SK-N-SH (cell line): ENCODE measurements at regions of chr3 and their contacts with region 1.

Region 1: GRCh38 chr3:126522363-126522788 is 1.6 kb upstream of the CHST13 start:
- DNase-seq: peak; percentile 88
- H3K4me3 ChIP-seq: peak overlapping the region in 1 of 2 experiments; percentile 18; a peak in 1 of 4 replicates
- H3K27ac ChIP-seq: no peak overlapping the region
- H3K4me1 ChIP-seq: peaks cover 0 to 18% of the 10 kb centered on the region in 2 experiments; a peak in 1 of 4 replicates
- H3K27me3 ChIP-seq: no peaks in the 10 kb centered on the region; the same call in 1 of the 2 replicates
- CTCF ChIP-seq: peak; percentile 79
- EP300 ChIP-seq: no peak
- RAD21 ChIP-seq: peak; percentile 83

Region 2: GRCh38 chr3:126508539-126508938 is 13.8 kb before region 1 on chr3:
- CTCF ChIA-PET with region 1: interaction called, 45 read pairs
- POLR2A ChIA-PET with region 1: interaction called, 3 read pairs
- DNase-seq: no peak
- H3K4me3 ChIP-seq: no peak overlapping the region
- H3K27ac ChIP-seq: no peak overlapping the region
- H3K4me1 ChIP-seq: peaks cover 0 to 4% of the 10 kb centered on the region in 2 experiments; a peak in 1 of 4 replicates
- H3K27me3 ChIP-seq: peaks cover 10% of the 10 kb centered on the region; the same call in 1 of the 2 replicates
- CTCF ChIP-seq: no peak
- EP300 ChIP-seq: no peak
- RAD21 ChIP-seq: no peak

Region 3: DNA sequence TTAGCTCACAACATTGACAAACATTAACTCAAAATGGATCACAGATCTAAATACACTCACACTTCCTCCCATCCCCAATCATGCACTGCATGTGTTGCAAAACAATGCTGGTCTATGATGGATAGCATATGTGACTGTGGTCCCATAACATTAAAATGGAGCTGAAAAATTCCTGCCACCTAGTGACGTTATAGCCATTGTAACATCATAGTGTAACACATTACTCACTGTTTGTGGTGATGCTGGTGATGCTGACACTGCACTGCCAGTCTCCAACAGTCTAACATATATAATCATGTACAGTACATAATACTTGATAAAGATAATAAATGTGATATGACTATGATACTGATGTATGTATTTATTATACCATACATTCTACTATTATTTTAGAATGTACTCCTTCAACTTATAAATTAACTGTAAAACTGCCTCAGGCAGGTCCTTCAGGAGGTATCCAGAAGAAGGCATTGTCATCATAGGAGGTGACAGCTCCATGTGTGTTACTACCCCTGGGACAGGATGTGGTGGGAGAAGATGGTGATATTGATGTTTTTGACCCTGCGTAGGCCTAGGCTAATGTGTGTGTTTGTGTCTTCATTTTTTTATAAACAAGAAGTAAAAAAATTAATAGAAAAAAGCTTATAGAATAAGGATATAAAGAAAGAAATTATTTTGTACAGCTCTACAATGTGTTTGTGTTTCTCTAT is 91.3 kb after region 1 on chr3:
- CTCF ChIA-PET with region 1: interaction called, 13 read pairs
- POLR2A ChIA-PET with region 1: no interaction called
- DNase-seq: peak; percentile 17
- H3K4me3 ChIP-seq: no peak overlapping the region
- H3K27ac ChIP-seq: peak overlapping the region in 1 of 2 experiments; percentile 43; a peak in 1 of 4 replicates
- H3K4me1 ChIP-seq: peaks cover 0 to 12% of the 10 kb centered on the region in 2 experiments; a peak in 2 of 4 replicates
- H3K27me3 ChIP-seq: no peaks in the 10 kb centered on the region
- CTCF ChIP-seq: no peak
- EP300 ChIP-seq: no peak
- RAD21 ChIP-seq: peak; percentile 37; the same call in 1 of the 2 replicates

Region 4: GRCh38 chr3:126811530-126811929 is 289.2 kb after region 1 on chr3:
- CTCF ChIA-PET with region 1: no interaction called
- POLR2A ChIA-PET with region 1: no interaction called
- DNase-seq: no peak
- H3K4me3 ChIP-seq: no peak overlapping the region
- H3K27ac ChIP-seq: no peak overlapping the region
- H3K4me1 ChIP-seq: peaks cover 0 to 10% of the 10 kb centered on the region in 2 experiments; a peak in 1 of 4 replicates
- H3K27me3 ChIP-seq: no peaks in the 10 kb centered on the region
- CTCF ChIP-seq: no peak
- EP300 ChIP-seq: no peak
- RAD21 ChIP-seq: no peak